ENCODE measurements at regions of chr6 and their contacts with region 1.

Region 1: GRCh38 chr6:32894080-32895005 is 40.4 kb downstream of the PSMB9 start:
- DNase-seq: peak; percentile 95
- H3K4me3 Mint-ChIP-seq: peak overlapping the region; percentile 99
- H3K27ac Mint-ChIP-seq: peak overlapping the region; percentile 91
- H3K4me1 Mint-ChIP-seq: peaks cover 40% of the 10 kb centered on the region
- H3K27me3 Mint-ChIP-seq: peaks cover 8% of the 10 kb centered on the region

Region 2: GRCh38 chr6:32940656-32941213 is 46.4 kb after region 1 on chr6 and contains the start of gene HLA-DMB:
- CTCF ChIA-PET with region 1: no interaction called
- POLR2A ChIA-PET with region 1: interaction called, 10 read pairs
- DNase-seq: peak; percentile 60
- H3K4me3 Mint-ChIP-seq: peak within 1 kb of the TSS; percentile 82
- H3K27ac Mint-ChIP-seq: peak within 1 kb of the TSS; percentile 94
- H3K4me1 Mint-ChIP-seq: peaks cover 59% of the 10 kb centered on the region
- H3K27me3 Mint-ChIP-seq: no peaks in the 10 kb centered on the region
- total RNA-seq, gene HLA-DMB: 19.1 to 20.0 TPM

Region 3: GRCh38 chr6:33049323-33050013 is 155.1 kb after region 1 on chr6:
- CTCF ChIA-PET with region 1: no interaction called
- POLR2A ChIA-PET with region 1: no interaction called
- DNase-seq: no peak
- H3K4me3 Mint-ChIP-seq: no peak overlapping the region
- H3K27ac Mint-ChIP-seq: no peak overlapping the region
- H3K4me1 Mint-ChIP-seq: no peaks in the 10 kb centered on the region
- H3K27me3 Mint-ChIP-seq: peaks cover 55% of the 10 kb centered on the region

Region 4: DNA sequence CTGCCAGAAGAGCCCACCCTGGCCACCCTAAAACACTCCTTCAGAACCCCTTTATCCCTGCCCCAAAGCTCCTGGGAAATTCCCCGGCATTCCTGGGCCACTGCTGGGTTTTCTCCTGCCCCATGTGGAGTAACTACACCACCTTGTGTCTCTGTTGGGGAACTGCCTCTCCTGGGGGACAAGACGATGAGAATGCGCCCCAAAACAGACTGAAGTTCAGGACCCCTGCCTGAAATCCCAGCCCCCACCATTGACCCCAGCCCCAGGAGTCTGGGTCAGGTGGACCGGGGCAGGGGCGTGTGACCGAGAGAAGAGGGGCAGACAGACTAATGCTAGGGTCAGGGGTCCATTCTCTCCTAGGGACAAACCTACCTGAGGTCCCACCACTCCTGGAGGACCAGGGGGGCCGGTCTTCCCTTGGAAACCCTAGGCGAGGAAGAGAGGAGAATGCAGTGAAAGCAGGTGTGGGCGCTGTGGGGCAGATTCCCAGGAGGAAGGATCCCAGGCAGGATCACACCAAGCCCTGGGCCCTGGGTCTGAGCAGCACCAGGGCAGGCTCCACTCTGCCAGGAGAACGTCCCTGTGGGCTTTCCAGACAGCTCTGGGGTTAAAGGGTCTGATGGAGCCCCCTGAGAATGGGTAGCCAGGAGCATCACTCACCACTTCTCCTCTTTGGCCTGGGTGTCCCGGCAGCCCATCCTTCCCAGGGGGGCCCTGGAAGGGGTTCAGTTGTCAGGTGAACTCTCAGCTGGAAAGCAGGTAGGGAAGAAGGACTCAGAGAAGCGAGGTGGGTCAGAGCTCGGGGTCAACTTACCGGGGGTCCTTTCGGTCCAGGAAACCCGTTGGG is 278.6 kb after region 1 on chr6:
- CTCF ChIA-PET with region 1: no interaction called
- POLR2A ChIA-PET with region 1: no interaction called
- DNase-seq: no peak
- H3K4me3 Mint-ChIP-seq: no peak overlapping the region
- H3K27ac Mint-ChIP-seq: no peak overlapping the region
- H3K4me1 Mint-ChIP-seq: no peaks in the 10 kb centered on the region
- H3K27me3 Mint-ChIP-seq: peaks cover 2% of the 10 kb centered on the region

Measured in activated CD4-positive, alpha-beta memory T cell treated with anti-CD3 and anti-CD28 coated beads, Interleukin-2, amount 10 ng/mL, durations not matched to agents 7 days and 5 days (primary cell).